ENCODE measurements at regions of chr12 and their contacts with region 1.

Region 1: DNA sequence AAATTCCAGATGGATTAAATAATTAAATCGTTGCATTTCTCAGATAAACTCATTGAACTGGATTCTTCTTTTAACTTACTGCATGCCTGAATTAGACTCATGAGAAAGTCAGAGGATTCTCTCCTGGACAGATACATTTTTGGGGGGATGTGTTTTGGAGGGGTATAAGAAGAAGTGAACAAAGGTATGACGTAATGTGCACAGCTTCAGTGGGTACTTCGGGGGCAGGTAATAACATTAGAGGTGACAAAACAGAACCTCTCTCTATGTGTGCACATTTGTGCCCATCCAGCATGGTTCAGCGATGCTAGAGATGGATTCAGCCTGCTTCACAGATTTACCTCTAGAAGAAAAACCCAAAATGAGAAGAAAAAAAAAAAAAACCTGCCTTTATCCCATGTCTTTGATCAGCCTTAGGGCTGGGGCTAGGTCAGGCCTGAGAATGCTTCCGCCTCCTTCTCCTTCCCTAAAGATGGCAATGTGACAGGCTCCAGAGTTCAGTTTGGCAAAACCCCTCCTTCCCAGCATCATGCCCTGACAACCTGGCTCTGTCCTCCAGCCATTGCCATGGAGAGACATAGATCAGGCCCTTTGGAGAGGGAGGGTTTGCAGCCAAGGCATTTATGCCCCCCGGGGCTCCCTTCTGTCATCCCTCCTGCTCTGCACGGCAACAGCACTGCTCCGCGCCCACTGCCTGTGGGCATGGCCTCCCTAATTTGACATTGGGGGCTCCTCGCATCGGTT is 166.7 kb downstream of the KCNA5 start:
- DNase-seq: no peak

Region 2: GRCh38 chr12:5059358-5059757 is 151.0 kb before region 1 on chr12:
- intact Hi-C with region 1: loop called in 1 of 2 experiments (anchors 5 kb)
- DNase-seq: no peak